K562 (cell line): ENCODE measurements at regions of chr15 and their contacts with region 1.

Region 1: DNA sequence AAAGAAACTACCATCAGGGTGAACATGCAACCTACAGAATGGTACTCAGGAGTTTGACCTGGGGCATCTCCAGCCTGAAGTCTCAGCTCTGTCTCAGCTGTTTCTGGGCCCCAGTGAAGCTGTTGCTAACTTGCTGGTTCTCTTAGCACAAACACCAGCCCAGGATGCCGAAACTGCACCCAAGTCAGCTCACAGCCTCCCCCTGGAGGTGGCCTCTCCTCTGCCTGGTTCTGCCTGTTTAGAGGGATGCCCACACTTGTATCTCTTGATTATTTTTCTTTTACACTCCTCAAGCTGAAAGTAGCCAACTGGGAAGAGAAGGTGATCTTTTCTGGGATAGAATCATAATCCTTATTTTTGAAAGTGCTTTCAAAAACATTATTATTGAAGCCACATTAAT is 289.0 kb upstream of the RASGRP1 start:
- DNase-seq: peak in 2 of 4 experiments; percentile 12 to 27
- ATAC-seq: peak; percentile 68; the same call in 2 of the 3 replicates
- H3K4me3 ChIP-seq: no peak overlapping the region
- H3K27ac ChIP-seq: no peak overlapping the region
- H3K4me1 ChIP-seq: no peaks in the 10 kb centered on the region
- H3K27me3 ChIP-seq: no peaks in the 10 kb centered on the region
- CTCF ChIP-seq: peak; percentile 28 to 50 (median 41); a peak in 4 of 6 replicates
- EP300 ChIP-seq: no peak
- POLR2A ChIP-seq: no peak
- RAD21 ChIP-seq: peak; percentile 12 to 27; a peak in 2 of 4 replicates

Region 2: GRCh38 chr15:38707802-38708671 is 145.6 kb before region 1 on chr15:
- CTCF ChIA-PET with region 1: no interaction called
- POLR2A ChIA-PET with region 1: no interaction called
- in situ Hi-C with region 1: no loop called
- intact Hi-C with region 1: loop called (anchors 2 kb)
- DNase-seq: peak; percentile 51 to 68 (median 62)
- ATAC-seq: peak; percentile 95
- H3K4me3 ChIP-seq: no peak overlapping the region
- H3K27ac ChIP-seq: no peak overlapping the region
- H3K4me1 ChIP-seq: no peaks in the 10 kb centered on the region
- H3K27me3 ChIP-seq: peaks cover 9 to 12% of the 10 kb centered on the region in 2 experiments
- CTCF ChIP-seq: peak; percentile 58 to 78 (median 71)
- EP300 ChIP-seq: no peak
- POLR2A ChIP-seq: no peak
- RAD21 ChIP-seq: peak; percentile 72 to 80